BJ (cell line): ENCODE measurements at regions of chr16 and their contacts with region 1.

Region 1: DNA sequence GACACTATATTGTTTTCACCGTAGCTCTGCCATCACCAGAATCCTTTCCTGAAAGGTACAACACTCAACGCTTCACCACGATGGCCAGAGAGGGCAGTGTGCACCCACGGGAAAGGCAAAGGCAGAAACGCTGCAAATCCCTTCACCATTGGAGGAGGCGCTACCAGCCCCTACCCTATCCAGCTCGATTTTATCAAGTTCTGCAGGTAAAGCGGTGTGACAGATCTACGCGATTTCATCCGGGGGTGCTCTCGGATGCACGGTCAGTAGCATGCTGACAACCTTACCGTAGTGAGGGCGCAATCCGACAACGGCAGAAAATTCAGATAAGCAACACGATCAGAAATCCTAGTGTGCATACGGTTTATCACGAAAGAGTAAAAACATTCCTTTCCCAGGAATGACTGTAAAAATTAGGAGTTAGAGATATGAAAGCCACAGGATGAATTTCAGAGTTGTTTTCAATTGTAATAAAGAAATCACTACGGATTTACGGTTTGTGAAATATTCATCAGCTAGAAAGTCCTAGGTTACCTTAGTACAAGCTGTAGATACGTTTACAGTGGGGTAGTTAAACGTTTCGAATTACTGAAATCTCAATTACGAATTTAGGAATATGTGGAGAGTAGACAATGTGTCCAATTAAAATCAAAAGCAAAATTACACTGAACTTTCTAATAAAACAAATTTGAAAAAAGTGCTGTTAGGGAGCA is 1.8 kb downstream of the NETO2 start:
- DNase-seq: peak; percentile 17
- H3K4me3 ChIP-seq: peak overlapping the region; percentile 55
- H3K27me3 ChIP-seq: no peaks in the 10 kb centered on the region
- CTCF ChIP-seq: peak; percentile 98

Region 2: GRCh38 chr16:47037746-47038458 is 104.0 kb before region 1 on chr16:
- CTCF ChIA-PET with region 1: interaction called, 11 read pairs
- POLR2A ChIA-PET with region 1: no interaction called
- DNase-seq: peak; percentile 10
- H3K4me3 ChIP-seq: peak overlapping the region; percentile 57
- H3K27me3 ChIP-seq: no peaks in the 10 kb centered on the region
- CTCF ChIP-seq: peak; percentile 92

Region 3: DNA sequence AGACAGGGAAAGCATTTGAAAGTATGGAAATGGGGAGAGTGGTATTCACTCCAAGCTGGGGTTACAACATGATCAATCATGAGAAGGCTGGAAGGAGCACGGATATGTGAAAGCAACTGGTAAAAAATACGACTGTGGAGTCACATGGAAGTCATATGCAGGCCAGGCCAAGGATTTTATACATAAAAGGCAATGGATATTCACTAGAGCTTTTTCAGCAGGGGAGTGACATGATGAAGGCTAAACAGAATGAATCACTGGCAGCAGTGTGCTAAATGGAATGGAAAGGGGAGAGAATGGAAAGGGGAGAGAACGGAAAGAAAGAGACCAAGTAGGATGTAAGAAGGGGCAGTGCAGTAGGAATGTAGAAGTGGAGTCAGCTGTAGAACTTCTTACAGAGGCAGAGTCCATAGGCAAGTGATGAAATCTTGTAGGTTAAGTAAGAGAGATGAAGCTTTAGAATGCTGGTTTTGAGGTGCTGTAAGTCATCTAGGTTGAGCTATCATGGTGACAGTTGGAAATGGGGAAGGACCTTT is 14.8 kb after region 1 on chr16:
- CTCF ChIA-PET with region 1: interaction called, 27 read pairs
- POLR2A ChIA-PET with region 1: no interaction called
- DNase-seq: no peak
- H3K4me3 ChIP-seq: no peak overlapping the region
- H3K27me3 ChIP-seq: no peaks in the 10 kb centered on the region
- CTCF ChIP-seq: no peak

Region 4: DNA sequence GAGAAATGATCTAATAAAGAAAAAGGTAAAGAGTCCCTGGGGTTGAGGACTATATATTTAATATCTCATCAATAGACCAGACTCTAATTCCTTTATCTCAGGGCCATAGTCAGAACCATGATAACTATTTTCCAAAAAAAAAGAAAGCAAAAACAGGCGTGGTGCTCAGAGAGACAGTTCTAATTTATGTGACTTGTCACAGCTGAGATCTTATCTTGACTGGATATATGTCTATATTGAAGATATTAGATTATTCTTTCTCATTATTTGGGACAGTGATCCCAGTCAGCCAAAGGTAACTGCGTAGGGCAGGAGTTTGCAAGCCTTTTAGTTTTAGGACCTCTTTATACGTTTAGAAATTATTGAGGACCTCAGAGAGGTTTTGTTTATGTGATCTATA is 266.6 kb after region 1 on chr16:
- CTCF ChIA-PET with region 1: no interaction called
- POLR2A ChIA-PET with region 1: no interaction called
- DNase-seq: no peak
- H3K4me3 ChIP-seq: no peak overlapping the region
- H3K27me3 ChIP-seq: no peaks in the 10 kb centered on the region
- CTCF ChIP-seq: no peak

Region 5: DNA sequence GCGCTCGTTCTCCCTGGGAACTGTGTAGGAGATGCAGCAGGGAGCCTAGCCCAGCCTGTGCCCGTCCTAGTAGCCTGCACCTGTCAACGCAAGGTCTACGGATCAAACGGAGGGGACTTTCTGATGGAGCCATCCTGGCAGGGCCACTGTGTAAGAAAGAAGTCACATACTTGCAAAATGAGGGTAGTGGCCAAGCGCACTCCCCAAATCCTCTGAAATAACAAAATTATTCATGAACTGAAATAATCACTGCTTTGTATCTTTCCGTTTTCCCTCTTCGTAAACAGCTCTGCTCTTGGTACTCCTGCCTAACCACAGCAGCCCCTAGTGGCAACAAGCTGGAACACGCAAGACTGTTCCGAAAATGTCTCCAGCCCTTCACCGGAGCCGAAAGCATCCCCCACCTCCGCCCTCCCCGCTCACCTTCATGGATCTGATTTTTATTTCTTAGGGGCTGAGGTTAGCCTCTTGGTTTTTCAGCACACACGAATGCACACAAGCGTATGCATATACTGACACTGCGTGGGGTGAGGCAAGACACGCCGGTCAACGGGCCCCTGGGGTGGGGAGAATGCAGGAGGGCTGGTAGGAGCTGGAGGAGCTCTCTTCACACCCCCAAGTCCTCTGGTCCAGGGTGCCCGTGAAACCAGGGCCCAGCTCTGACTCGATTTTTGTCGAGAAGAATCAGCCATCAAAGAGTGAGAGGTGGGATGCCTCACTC is 913.1 kb after region 1 on chr16:
- CTCF ChIA-PET with region 1: interaction called, 16 read pairs
- POLR2A ChIA-PET with region 1: no interaction called
- DNase-seq: no peak
- H3K4me3 ChIP-seq: no peak overlapping the region
- H3K27me3 ChIP-seq: no peaks in the 10 kb centered on the region; the same call in 1 of the 2 replicates
- CTCF ChIP-seq: peak; percentile 97

Region 6: GRCh38 chr16:48156790-48157209 is 1014.9 kb after region 1 on chr16:
- CTCF ChIA-PET with region 1: interaction called, 69 read pairs
- POLR2A ChIA-PET with region 1: no interaction called
- DNase-seq: no peak
- H3K4me3 ChIP-seq: no peak overlapping the region
- H3K27me3 ChIP-seq: no peaks in the 10 kb centered on the region; the same call in 1 of the 2 replicates
- CTCF ChIP-seq: peak; percentile 97